H1 (cell line): ENCODE measurements at regions of chr6 and their contacts with region 1.

Region 1: DNA sequence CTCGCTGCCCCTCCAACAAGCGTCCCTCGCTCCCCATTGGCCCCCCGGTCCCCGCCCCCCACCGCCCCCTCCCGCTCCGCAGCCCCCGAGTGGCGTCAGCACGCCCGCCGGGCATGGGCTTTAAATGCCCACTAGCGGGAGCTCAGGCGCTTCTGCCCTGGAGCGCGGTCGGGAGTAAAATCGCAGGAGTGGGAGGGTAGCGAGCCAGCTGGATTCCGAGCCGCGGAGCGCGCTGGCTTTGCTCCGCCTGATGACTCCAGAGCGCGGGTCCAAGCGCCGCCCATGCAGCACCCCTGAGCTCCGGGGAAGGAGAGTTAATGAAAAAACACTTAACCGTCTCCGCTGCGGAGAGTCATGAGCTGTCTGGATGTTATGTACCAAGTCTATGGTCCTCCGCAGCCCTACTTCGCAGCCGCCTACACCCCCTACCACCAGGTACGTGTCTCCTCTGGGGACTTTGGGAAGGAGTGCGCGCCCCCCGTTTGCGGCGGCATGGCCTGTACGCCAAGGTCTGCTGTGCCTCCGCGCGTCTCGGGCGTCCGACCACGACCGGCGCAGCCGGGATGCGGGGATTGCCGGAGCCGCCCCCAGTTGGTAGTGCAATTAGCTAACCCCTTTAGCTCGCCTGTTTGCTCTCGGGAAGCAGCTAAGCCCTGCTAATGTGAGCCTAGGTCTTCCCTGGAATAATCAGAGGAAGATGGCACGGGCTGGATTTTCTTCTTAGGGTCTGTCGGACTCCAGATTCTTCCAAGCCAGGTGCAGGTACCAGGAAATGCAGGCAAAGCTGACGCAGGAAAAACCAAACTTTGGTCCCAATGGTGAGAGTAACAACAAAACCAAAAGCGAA is at the start of gene VGLL2:
- DNase-seq: peak in 1 of 2 experiments; percentile 79
- H3K4me3 ChIP-seq: peak within 1 kb of the TSS; percentile 54 to 64 (median 62)
- H3K27ac ChIP-seq: no peak within 1 kb of the TSS
- H3K4me1 ChIP-seq: peaks cover 3 to 19% (median 7%) of the 10 kb centered on the region in 4 experiments; a peak in 6 of 7 replicates
- H3K27me3 ChIP-seq: peaks cover 76 to 91% (median 85%) of the 10 kb centered on the region in 4 experiments
- CTCF ChIP-seq: no peak
- EP300 ChIP-seq: no peak
- POLR2A ChIP-seq: no peak
- RAD21 ChIP-seq: no peak
- total RNA-seq, gene VGLL2: 0.13 TPM in 1 of 2 replicates, not detected in the other

Region 2: DNA sequence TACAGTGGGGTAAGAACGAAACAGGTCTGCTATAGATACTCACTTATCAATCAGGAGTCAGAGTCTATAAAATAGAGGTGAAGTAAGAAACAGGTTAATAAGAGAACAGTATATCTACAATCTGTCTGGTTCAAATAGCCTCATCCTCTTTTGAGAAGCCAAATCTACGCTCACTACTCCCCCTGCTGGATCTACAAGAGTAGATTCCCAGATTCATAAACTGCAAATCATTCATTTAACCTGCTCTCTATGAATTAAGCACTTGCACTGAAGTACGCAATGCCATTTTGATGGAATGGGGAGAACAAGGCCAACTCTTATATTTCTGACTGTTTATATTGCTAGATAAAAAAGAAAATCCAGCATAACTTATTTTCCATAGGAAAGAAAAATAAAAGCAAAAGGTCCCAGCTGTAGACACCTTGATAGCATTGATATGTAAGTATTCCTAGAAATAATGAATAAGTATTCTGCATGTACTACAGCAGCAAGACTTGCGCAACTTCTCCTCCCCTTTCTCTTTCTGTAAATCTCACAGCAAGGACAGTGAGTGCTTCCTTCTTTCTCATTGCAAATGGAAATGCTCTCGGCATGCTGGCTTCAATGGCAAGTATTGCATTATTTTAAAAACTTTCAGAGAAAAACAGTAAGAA is 296.3 kb before region 1 on chr6:
- CTCF ChIA-PET with region 1: interaction called, 10 read pairs
- POLR2A ChIA-PET with region 1: no interaction called
- DNase-seq: no peak
- H3K4me3 ChIP-seq: no peak overlapping the region
- H3K27ac ChIP-seq: no peak overlapping the region
- H3K4me1 ChIP-seq: no peaks in the 10 kb centered on the region
- H3K27me3 ChIP-seq: no peaks in the 10 kb centered on the region
- CTCF ChIP-seq: peak in 2 of 3 experiments; percentile 64 to 73; a peak in 3 of 4 replicates
- EP300 ChIP-seq: no peak
- POLR2A ChIP-seq: no peak
- RAD21 ChIP-seq: peak; percentile 65 to 75

Region 3: DNA sequence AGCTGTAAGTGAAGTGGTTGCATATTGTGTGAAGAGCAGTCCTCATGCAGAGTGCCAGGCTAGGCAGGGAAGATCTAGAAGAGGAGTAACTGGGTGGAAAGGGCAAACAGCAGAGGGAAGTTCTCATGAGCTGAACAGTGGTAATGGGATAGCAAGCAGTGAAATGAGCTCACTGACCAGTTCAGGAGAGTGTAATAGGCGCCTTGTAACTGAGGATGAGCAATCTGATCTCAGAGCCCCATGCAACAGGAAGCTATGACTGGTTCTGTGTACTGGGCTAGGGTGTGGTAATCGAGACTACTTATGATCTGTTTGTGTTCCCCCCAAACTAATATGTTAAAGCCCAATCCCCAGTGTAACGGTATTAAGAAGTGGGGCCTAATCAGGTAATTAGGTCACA is 290.0 kb before region 1 on chr6:
- CTCF ChIA-PET with region 1: interaction called, 11 read pairs
- POLR2A ChIA-PET with region 1: no interaction called
- DNase-seq: no peak
- H3K4me3 ChIP-seq: no peak overlapping the region
- H3K27ac ChIP-seq: no peak overlapping the region
- H3K4me1 ChIP-seq: no peaks in the 10 kb centered on the region
- H3K27me3 ChIP-seq: peaks cover 0 to 1% (median 0%) of the 10 kb centered on the region in 4 experiments; a peak in 1 of 7 replicates
- CTCF ChIP-seq: no peak
- EP300 ChIP-seq: no peak
- POLR2A ChIP-seq: no peak
- RAD21 ChIP-seq: no peak

Region 4: GRCh38 chr6:117167520-117168271 is 97.9 kb before region 1 on chr6:
- CTCF ChIA-PET with region 1: interaction called, 20 read pairs
- POLR2A ChIA-PET with region 1: no interaction called
- DNase-seq: no peak
- H3K4me3 ChIP-seq: no peak overlapping the region
- H3K27ac ChIP-seq: no peak overlapping the region
- H3K4me1 ChIP-seq: no peaks in the 10 kb centered on the region
- H3K27me3 ChIP-seq: no peaks in the 10 kb centered on the region
- CTCF ChIP-seq: peak; percentile 6 to 55 (median 44)
- EP300 ChIP-seq: no peak
- POLR2A ChIP-seq: no peak
- RAD21 ChIP-seq: peak; percentile 56 to 62

Region 5: GRCh38 chr6:117237561-117237960 is 28.1 kb before region 1 on chr6:
- CTCF ChIA-PET with region 1: interaction called, 10 read pairs
- POLR2A ChIA-PET with region 1: no interaction called
- DNase-seq: no peak
- H3K4me3 ChIP-seq: no peak overlapping the region
- H3K27ac ChIP-seq: no peak overlapping the region
- H3K4me1 ChIP-seq: no peaks in the 10 kb centered on the region
- H3K27me3 ChIP-seq: no peaks in the 10 kb centered on the region
- CTCF ChIP-seq: no peak
- EP300 ChIP-seq: no peak
- POLR2A ChIP-seq: no peak
- RAD21 ChIP-seq: no peak

Region 6: GRCh38 chr6:117317261-117317660 is 51.6 kb after region 1 on chr6:
- CTCF ChIA-PET with region 1: interaction called, 11 read pairs
- POLR2A ChIA-PET with region 1: no interaction called
- DNase-seq: no peak
- H3K4me3 ChIP-seq: no peak overlapping the region
- H3K27ac ChIP-seq: no peak overlapping the region
- H3K4me1 ChIP-seq: peaks cover 0 to 3% (median 0%) of the 10 kb centered on the region in 4 experiments; a peak in 1 of 7 replicates
- H3K27me3 ChIP-seq: no peaks in the 10 kb centered on the region
- CTCF ChIP-seq: peak in 2 of 3 experiments; percentile 28 to 57; a peak in 2 of 4 replicates
- EP300 ChIP-seq: no peak
- POLR2A ChIP-seq: no peak
- RAD21 ChIP-seq: peak; percentile 70 to 75

Region 7: GRCh38 chr6:117425431-117426153 is 160.0 kb after region 1 on chr6 and contains the start of gene ROS1:
- CTCF ChIA-PET with region 1: no interaction called
- POLR2A ChIA-PET with region 1: no interaction called
- DNase-seq: no peak
- H3K4me3 ChIP-seq: no peak within 1 kb of the TSS
- H3K27ac ChIP-seq: no peak within 1 kb of the TSS
- H3K4me1 ChIP-seq: no peaks in the 10 kb centered on the region
- H3K27me3 ChIP-seq: no peaks in the 10 kb centered on the region
- CTCF ChIP-seq: no peak
- EP300 ChIP-seq: no peak
- POLR2A ChIP-seq: no peak
- RAD21 ChIP-seq: no peak
- total RNA-seq, gene ROS1: not detected in 2 replicates